CD8-positive, alpha-beta T cell (primary cell): ENCODE measurements at regions of chr19 and their contacts with region 1.

Region 1: GRCh38 chr19:38514812-38515633 is 81.5 kb downstream of the RYR1 start:
- DNase-seq: peak; percentile 53 to 89 (median 73)
- ATAC-seq: peak; percentile 99
- H3K4me3 ChIP-seq: no peak overlapping the region
- H3K4me3 Mint-ChIP-seq: no peak overlapping the region
- H3K27ac ChIP-seq: no peak overlapping the region
- H3K27ac Mint-ChIP-seq: no peak overlapping the region
- H3K4me1 ChIP-seq: peaks cover 9% of the 10 kb centered on the region
- H3K4me1 Mint-ChIP-seq: peaks cover 7% of the 10 kb centered on the region
- H3K27me3 ChIP-seq: peaks cover 0 to 4% of the 10 kb centered on the region in 2 experiments
- H3K27me3 Mint-ChIP-seq: peaks cover 2% of the 10 kb centered on the region
- CTCF ChIP-seq: peak; percentile 92

Region 2: DNA sequence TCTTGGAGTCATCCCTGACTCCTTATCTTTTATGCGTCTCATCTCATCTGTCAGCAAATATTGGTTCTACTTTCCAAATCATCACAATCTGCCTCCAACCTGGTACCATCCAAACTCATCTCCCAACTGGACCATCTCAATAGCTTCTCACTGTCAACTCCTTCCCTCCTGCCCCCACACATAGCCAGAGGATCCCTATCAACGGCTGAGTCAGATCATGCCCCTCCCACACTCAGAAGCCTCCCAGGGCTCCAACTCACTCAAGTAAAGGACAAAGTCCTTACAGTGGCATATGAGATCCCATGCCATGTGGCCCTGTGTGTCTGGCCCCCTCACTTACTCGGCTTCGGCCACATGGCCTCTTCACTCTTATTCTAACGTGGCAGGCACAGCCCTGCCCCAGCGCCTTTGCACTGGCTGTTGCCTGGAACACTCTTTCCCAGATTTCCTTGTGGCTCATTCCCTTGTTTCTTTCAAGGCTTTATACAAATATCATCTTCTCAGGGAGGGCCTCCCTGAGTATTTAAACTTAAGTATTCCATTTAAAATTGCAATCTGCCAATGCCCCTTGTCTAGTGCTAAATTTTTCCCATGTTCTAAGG is 122.2 kb before region 1 on chr19:
- CTCF ChIA-PET with region 1: no interaction called
- POLR2A ChIA-PET with region 1: no interaction called
- intact Hi-C with region 1: no loop called
- DNase-seq: no peak
- ATAC-seq: no peak
- H3K4me3 ChIP-seq: no peak overlapping the region
- H3K4me3 Mint-ChIP-seq: no peak overlapping the region
- H3K27ac ChIP-seq: no peak overlapping the region
- H3K27ac Mint-ChIP-seq: no peak overlapping the region
- H3K4me1 ChIP-seq: peaks cover 30% of the 10 kb centered on the region
- H3K4me1 Mint-ChIP-seq: peaks cover 24% of the 10 kb centered on the region
- H3K27me3 ChIP-seq: peaks cover 0 to 4% of the 10 kb centered on the region in 2 experiments
- H3K27me3 Mint-ChIP-seq: peaks cover 14% of the 10 kb centered on the region
- CTCF ChIP-seq: no peak

Region 3: GRCh38 chr19:38402967-38403861 is 111.8 kb before region 1 on chr19 and contains the start of gene FAM98C:
- CTCF ChIA-PET with region 1: interaction called, 22 read pairs
- POLR2A ChIA-PET with region 1: interaction called, 4 read pairs
- intact Hi-C with region 1: loop called (anchors 1 kb)
- DNase-seq: peak; percentile 95 to 99 (median 97)
- ATAC-seq: peak; percentile 96
- H3K4me3 ChIP-seq: peak within 1 kb of the TSS; percentile 76 to 95
- H3K4me3 Mint-ChIP-seq: peak within 1 kb of the TSS; percentile 94
- H3K27ac ChIP-seq: peak within 1 kb of the TSS; percentile 79 to 81
- H3K27ac Mint-ChIP-seq: peak within 1 kb of the TSS; percentile 98
- H3K4me1 ChIP-seq: peaks cover 11% of the 10 kb centered on the region
- H3K4me1 Mint-ChIP-seq: peaks cover 15% of the 10 kb centered on the region
- H3K27me3 ChIP-seq: no peaks in the 10 kb centered on the region
- H3K27me3 Mint-ChIP-seq: no peaks in the 10 kb centered on the region
- CTCF ChIP-seq: peak; percentile 95
- total RNA-seq, gene FAM98C: 28.2 to 29.3 TPM

Region 4: DNA sequence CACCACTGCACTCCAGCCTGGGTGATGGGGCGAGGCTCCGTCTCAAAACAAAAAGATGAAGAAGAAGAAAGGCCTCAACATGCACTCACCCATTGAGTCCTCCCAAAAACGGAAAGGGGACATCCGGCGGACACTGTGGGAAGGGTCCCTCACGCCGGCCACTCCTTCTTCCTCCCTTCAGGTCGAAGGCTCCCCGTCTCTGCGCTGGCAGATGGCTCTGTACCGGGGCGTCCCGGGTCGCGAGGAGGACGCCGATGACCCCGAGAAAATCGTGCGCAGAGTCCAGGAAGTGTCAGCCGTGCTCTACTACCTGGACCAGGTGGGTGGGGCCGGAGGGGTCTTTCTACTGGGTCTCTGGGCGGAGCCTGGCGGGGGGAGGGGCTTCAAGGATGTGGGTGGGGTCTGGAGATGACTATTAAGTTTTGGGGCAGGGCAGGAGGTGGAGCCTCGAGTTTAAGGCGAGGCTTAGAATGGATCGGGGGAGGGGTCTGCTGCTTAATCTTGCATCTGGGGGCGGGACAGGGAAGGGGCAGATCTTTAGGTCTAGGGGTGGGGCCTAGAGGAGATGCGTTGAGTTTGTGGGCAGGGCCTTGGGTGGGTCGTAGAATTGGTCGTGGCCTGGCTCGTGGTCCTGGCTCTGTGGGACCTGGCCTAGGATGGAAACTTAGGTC is 12.6 kb after region 1 on chr19:
- CTCF ChIA-PET with region 1: interaction called, 11 read pairs
- POLR2A ChIA-PET with region 1: no interaction called
- intact Hi-C with region 1: no loop called
- DNase-seq: peak in 2 of 9 experiments; percentile 41 to 46
- ATAC-seq: peak; percentile 85
- H3K4me3 ChIP-seq: no peak overlapping the region
- H3K4me3 Mint-ChIP-seq: peak overlapping the region; percentile 68
- H3K27ac ChIP-seq: no peak overlapping the region
- H3K27ac Mint-ChIP-seq: no peak overlapping the region
- H3K4me1 ChIP-seq: no peaks in the 10 kb centered on the region
- H3K4me1 Mint-ChIP-seq: peaks cover 3% of the 10 kb centered on the region
- H3K27me3 ChIP-seq: no peaks in the 10 kb centered on the region
- H3K27me3 Mint-ChIP-seq: peaks cover 3% of the 10 kb centered on the region
- CTCF ChIP-seq: no peak

Region 5: GRCh38 chr19:38538793-38539528 is 23.9 kb after region 1 on chr19:
- CTCF ChIA-PET with region 1: interaction called, 27 read pairs
- POLR2A ChIA-PET with region 1: interaction called, 4 read pairs
- intact Hi-C with region 1: loop called (anchors 1 to 2 kb)
- DNase-seq: peak in 5 of 9 experiments; percentile 24 to 84 (median 64)
- ATAC-seq: peak; percentile 88
- H3K4me3 ChIP-seq: peak overlapping the region in 1 of 2 experiments; percentile 11
- H3K4me3 Mint-ChIP-seq: peak overlapping the region; percentile 52
- H3K27ac ChIP-seq: no peak overlapping the region
- H3K27ac Mint-ChIP-seq: peak overlapping the region; percentile 85
- H3K4me1 ChIP-seq: peaks cover 36% of the 10 kb centered on the region
- H3K4me1 Mint-ChIP-seq: peaks cover 35% of the 10 kb centered on the region
- H3K27me3 ChIP-seq: no peaks in the 10 kb centered on the region
- H3K27me3 Mint-ChIP-seq: no peaks in the 10 kb centered on the region
- CTCF ChIP-seq: no peak

Region 6: DNA sequence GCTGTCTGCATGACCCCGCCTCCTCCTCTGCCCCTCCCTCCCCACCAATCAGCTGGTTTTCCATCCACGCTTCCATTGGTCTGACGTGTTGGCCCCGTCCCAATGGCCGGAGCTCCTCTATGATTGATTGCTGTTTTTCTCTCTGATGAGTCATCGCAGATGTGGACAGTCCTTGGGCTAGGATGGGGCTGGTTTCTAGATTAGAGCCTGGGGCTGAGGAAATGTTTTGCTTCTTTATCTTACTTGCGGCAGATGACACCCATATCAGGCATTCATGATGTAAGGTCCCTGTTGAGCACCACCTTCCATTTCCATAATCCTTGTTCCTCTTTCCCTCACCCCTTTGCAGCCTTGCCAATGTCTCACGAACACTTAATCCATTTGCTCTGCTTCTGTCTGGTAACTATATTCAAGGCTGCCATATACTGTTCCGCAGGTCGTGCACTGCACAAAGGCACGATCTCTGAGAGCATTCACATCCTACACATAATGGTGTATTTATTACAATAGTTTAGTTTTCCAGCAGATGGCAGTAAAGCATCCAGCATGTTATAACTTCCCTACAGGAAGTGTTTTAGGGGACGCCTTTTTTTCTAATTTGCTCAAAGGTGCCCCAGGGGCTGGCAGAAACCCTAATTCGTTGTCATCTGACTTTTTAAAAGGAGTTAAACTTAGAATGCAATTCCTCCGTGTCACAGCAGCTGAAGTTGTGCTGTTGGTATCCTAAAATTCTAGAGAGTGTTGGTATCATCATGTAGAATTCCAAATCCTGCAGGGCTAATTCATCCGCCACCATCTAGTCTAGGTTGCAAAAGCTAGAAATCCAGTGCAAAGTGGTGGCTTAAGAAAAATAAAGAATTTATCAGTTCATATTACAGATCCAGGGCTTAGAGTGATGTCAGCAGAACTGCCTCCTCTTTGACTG is 29.3 kb after region 1 on chr19:
- CTCF ChIA-PET with region 1: interaction called, 27 read pairs
- POLR2A ChIA-PET with region 1: interaction called, 3 read pairs
- intact Hi-C with region 1: loop called (anchors 1 to 2 kb)
- DNase-seq: peak in 4 of 9 experiments; percentile 16 to 81 (median 64)
- ATAC-seq: peak; percentile 74
- H3K4me3 ChIP-seq: no peak overlapping the region
- H3K4me3 Mint-ChIP-seq: peak overlapping the region; percentile 9
- H3K27ac ChIP-seq: no peak overlapping the region
- H3K27ac Mint-ChIP-seq: no peak overlapping the region
- H3K4me1 ChIP-seq: peaks cover 16% of the 10 kb centered on the region
- H3K4me1 Mint-ChIP-seq: peaks cover 16% of the 10 kb centered on the region
- H3K27me3 ChIP-seq: no peaks in the 10 kb centered on the region
- H3K27me3 Mint-ChIP-seq: no peaks in the 10 kb centered on the region
- CTCF ChIP-seq: peak; percentile 67